GM12878 (cell line): ENCODE measurements at regions of chr15 and their contacts with region 1.

Region 1: DNA sequence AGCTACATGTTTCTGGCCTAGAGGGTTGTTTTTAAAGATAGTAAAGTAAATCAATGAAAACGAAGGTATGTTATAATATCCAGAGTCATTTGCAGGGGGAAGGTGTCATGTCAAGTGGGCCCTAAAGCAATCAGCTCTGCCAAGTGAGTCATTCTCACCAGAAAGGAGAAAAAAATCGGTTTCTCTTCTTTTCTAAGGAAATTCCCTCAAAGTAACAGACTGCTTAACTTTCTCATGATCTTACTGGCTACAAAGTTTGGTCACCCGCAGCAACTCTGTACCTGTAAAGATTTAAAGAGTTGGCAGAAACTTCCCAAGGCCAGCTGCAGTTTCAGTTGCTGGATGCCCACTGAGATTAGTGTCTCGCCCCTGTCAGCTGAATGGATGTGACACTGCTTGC is 5.5 kb upstream of the FSIP1 start:
- DNase-seq: no peak
- ATAC-seq: peak; percentile 73
- H3K4me3 ChIP-seq: no peak overlapping the region
- H3K27ac ChIP-seq: no peak overlapping the region
- H3K4me1 ChIP-seq: peaks cover 17% of the 10 kb centered on the region
- H3K27me3 ChIP-seq: no peaks in the 10 kb centered on the region
- CTCF ChIP-seq: no peak
- EP300 ChIP-seq: no peak
- POLR2A ChIP-seq: no peak
- RAD21 ChIP-seq: no peak

Region 2: GRCh38 chr15:39801641-39802309 is 13.7 kb after region 1 on chr15:
- CTCF ChIA-PET with region 1: interaction called, 30 read pairs
- POLR2A ChIA-PET with region 1: interaction called, 5 read pairs
- RAD21 ChIA-PET with region 1: interaction called, 12 read pairs
- SMC1A ChIA-PET with region 1: interaction called, 37 read pairs
- in situ Hi-C with region 1: no loop called
- intact Hi-C with region 1: no loop called
- DNase-seq: no peak
- ATAC-seq: peak; percentile 96
- H3K4me3 ChIP-seq: no peak overlapping the region
- H3K27ac ChIP-seq: no peak overlapping the region
- H3K4me1 ChIP-seq: peaks cover 5% of the 10 kb centered on the region; the same call in 1 of the 2 replicates
- H3K27me3 ChIP-seq: no peaks in the 10 kb centered on the region; a peak in 1 of 4 replicates
- CTCF ChIP-seq: peak; percentile 63 to 67 (median 65); a peak in 5 of 6 replicates
- EP300 ChIP-seq: no peak
- POLR2A ChIP-seq: no peak
- RAD21 ChIP-seq: peak; percentile 67

Region 3: DNA sequence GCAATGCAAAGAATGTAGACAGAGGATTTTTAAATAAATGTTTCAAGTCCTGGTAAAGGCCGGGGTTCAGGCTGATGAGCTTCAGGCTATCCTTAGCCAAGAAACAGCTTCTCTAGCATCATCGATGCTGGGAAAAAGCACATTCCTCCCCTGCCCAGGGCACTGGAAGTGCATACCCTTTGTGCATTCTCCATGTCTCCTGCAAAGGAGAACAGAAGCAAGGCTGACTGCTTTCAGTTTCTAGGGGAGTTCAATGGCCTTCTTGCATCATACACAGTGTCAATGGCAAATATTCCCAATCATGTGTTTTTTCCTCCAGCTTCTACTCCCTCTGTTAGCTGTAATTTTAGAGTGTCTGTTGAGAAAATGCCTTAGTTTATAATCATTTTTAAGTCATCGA is 72.1 kb after region 1 on chr15:
- CTCF ChIA-PET with region 1: interaction called, 11 read pairs
- POLR2A ChIA-PET with region 1: no interaction called
- RAD21 ChIA-PET with region 1: no interaction called
- SMC1A ChIA-PET with region 1: interaction called, 7 read pairs
- in situ Hi-C with region 1: no loop called
- intact Hi-C with region 1: no loop called
- DNase-seq: no peak
- ATAC-seq: no peak
- H3K4me3 ChIP-seq: no peak overlapping the region
- H3K27ac ChIP-seq: no peak overlapping the region
- H3K4me1 ChIP-seq: no peaks in the 10 kb centered on the region
- H3K27me3 ChIP-seq: no peaks in the 10 kb centered on the region; a peak in 1 of 4 replicates
- CTCF ChIP-seq: no peak
- EP300 ChIP-seq: no peak
- POLR2A ChIP-seq: no peak
- RAD21 ChIP-seq: no peak

Region 4: DNA sequence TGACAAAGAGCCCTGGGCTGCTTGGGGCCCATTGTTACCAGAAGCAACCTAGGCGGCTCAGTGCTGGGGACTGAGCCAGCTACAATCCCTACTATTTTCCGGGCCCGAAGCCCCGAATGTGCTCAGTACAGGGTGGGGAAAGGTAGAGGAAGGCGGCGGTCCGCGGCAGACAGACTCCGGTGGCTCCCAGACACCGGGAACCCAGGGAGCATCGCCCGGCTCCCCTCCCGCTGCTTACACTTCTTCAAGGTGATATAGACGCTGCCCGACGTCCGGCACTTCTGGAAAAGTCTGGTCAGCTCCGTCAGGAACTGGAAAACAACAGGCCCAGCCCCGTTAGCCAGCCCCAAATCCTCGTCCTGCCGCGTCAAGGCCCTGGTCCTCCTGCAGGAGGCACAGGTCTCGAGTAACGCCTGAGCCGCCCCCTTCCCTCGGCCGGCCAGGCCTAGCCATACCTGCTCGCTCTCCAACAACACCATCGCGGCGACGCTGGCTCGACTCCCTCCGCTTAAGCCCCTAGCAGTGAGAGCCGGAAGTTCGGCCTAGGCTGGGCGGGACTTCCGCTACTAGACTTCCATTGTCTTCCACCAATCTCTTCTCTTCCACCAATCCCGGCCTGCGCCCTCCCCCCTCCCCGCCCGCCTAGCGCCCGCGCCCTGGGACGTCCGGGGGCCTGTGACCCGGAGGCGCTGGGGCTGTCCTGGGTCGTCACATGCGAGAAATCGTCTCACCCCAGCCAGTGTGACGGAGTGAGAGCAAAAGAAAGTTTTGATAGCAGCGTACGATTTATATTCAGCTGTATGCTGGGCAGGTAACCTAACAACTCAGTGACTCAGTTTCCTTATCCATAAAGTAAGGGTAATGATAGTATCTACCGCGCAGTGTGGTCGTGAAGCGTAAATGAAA is 250.8 kb after region 1 on chr15 and contains the start of gene SRP14:
- CTCF ChIA-PET with region 1: interaction called, 6 read pairs
- POLR2A ChIA-PET with region 1: no interaction called
- RAD21 ChIA-PET with region 1: interaction called, 5 read pairs
- SMC1A ChIA-PET with region 1: interaction called, 10 read pairs
- in situ Hi-C with region 1: no loop called
- intact Hi-C with region 1: loop called (anchors 5 kb)
- DNase-seq: peak; percentile 75
- ATAC-seq: peak; percentile 95
- H3K4me3 ChIP-seq: peak within 1 kb of the TSS; percentile 89
- H3K27ac ChIP-seq: peak within 1 kb of the TSS; percentile 79
- H3K4me1 ChIP-seq: peaks cover 9% of the 10 kb centered on the region
- H3K27me3 ChIP-seq: no peaks in the 10 kb centered on the region
- CTCF ChIP-seq: 0 out of 6 replicates have a peak, but pooled peaks of 1 of the 3 experiments have one; percentile 1
- EP300 ChIP-seq: 0 out of 4 replicates have a peak, but pooled peaks of 1 of the 2 experiments have one; percentile 3
- POLR2A ChIP-seq: peak; percentile 98
- RAD21 ChIP-seq: no peak
- polyA plus RNA-seq, gene SRP14: 1,041 to 1,182 TPM